Heart left ventricle (tissue), 16 donors: ENCODE measurements at regions of chr5 and their contacts with region 1.

Region 1: DNA sequence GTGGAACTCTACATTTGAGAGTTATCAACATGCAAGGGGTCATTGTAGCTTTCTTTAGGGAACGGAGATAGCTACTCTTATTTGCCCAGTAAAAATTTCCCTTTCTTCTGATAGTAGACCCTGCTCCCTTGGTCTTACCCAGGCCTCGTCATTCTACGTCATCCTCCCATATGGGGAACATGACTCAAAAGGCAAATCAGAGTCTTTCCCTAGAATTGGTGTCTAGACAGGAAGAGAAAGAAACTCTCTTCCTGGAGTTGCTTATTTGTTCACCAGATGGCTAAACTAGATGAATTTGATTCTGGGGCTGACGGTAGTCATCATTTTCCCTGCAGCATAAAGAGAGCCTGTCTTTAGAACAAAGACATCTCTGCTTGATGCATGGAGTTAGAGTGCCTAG is 12.2 kb upstream of the SLC38A9 start:
- DNase-seq: no peak
- ATAC-seq: no peak
- H3K4me3 ChIP-seq: no peak overlapping the region
- H3K27ac ChIP-seq: no peak overlapping the region
- H3K4me1 ChIP-seq: no peaks in the 10 kb centered on the region
- H3K27me3 ChIP-seq: no peaks in the 10 kb centered on the region
- CTCF ChIP-seq: no peak
- POLR2A ChIP-seq: no peak

Region 2: GRCh38 chr5:55913466-55914413 is 189.5 kb after region 1 on chr5:
- intact Hi-C with region 1: loop called in 1 of 10 experiments (anchors 10 kb)
- DNase-seq: no peak
- ATAC-seq: no peak
- H3K4me3 ChIP-seq: no peak overlapping the region
- H3K27ac ChIP-seq: no peak overlapping the region
- H3K4me1 ChIP-seq: peaks cover 0 to 5% (median 0%) of the 10 kb centered on the region in 12 donors
- H3K27me3 ChIP-seq: no peaks in the 10 kb centered on the region
- CTCF ChIP-seq: no peak
- POLR2A ChIP-seq: no peak

Region 3: GRCh38 chr5:56409331-56410190 is 685.3 kb after region 1 on chr5:
- intact Hi-C with region 1: no loop called
- DNase-seq: peak in 3 of 5 donors; percentile 18 to 36 (median 35)
- ATAC-seq: peak; percentile 19 to 86 (median 78)
- H3K4me3 ChIP-seq: no peak overlapping the region
- H3K27ac ChIP-seq: peak overlapping the region in 2 of 12 donors; percentile 34 to 80
- H3K4me1 ChIP-seq: peaks cover 0 to 47% (median 8%) of the 10 kb centered on the region in 12 donors
- H3K27me3 ChIP-seq: no peaks in the 10 kb centered on the region
- CTCF ChIP-seq: no peak
- POLR2A ChIP-seq: no peak